Adrenal gland (tissue), 19 donors: ENCODE measurements at regions of chr2 and their contacts with region 1.

Region 1: GRCh38 chr2:222057347-222058073 is 241.3 kb downstream of the PAX3 start:
- DNase-seq: no peak
- H3K4me3 ChIP-seq: no peak overlapping the region
- H3K27ac ChIP-seq: no peak overlapping the region
- H3K4me1 ChIP-seq: no peaks in the 10 kb centered on the region
- H3K27me3 ChIP-seq: peaks cover 32% of the 10 kb centered on the region
- CTCF ChIP-seq: peak; percentile 16 to 68 (median 46)
- POLR2A ChIP-seq: no peak

Region 2: DNA sequence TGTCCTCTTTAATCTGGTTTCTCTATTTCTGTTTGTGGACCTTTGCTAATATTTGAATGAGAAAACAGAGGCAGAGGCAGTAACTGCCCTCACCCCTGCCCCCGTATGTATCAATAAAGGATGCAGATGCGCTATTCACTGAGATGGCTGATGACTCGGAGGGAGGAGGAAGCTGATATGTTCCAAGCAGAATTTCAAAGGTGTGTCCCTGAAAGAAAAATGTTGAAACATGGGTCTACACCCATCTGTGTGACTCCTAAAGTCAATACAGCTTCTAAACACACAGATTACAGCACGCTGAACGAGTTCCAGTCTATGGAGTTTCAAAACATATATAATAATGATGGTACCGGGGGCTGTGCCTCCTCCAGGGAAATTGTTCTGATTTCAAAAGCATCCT is 524.2 kb before region 1 on chr2:
- intact Hi-C with region 1: no loop called
- DNase-seq: no peak
- H3K4me3 ChIP-seq: no peak overlapping the region
- H3K27ac ChIP-seq: no peak overlapping the region
- H3K4me1 ChIP-seq: no peaks in the 10 kb centered on the region
- H3K27me3 ChIP-seq: no peaks in the 10 kb centered on the region
- CTCF ChIP-seq: no peak
- POLR2A ChIP-seq: no peak

Region 3: DNA sequence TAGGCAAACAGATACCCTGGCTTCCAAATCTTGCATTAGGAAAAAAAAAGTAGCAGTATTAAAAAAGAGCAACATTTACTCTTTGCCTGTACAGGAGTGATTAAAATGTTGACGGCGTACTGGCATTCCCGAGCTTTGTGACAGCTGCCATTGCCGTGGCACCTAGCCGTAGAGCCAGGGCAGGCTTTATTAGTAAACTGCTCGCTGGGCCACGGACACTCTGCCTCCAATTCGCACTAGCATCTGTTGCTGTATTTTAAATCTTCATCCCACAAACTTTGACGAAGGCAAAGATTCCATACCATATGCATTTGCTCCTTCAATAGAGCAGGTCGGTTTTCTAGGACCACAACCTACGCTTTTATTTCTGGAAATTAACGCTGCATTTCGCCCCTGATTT is 440.9 kb before region 1 on chr2:
- intact Hi-C with region 1: no loop called
- DNase-seq: no peak
- H3K4me3 ChIP-seq: no peak overlapping the region
- H3K27ac ChIP-seq: no peak overlapping the region
- H3K4me1 ChIP-seq: no peaks in the 10 kb centered on the region
- H3K27me3 ChIP-seq: no peaks in the 10 kb centered on the region
- CTCF ChIP-seq: no peak
- POLR2A ChIP-seq: no peak

Region 4: GRCh38 chr2:222613715-222614331 is 556.3 kb after region 1 on chr2:
- intact Hi-C with region 1: loop called in 1 of 2 experiments (anchors 10 kb)
- DNase-seq: peak in 2 of 7 donors; percentile 18
- H3K4me3 ChIP-seq: no peak overlapping the region
- H3K27ac ChIP-seq: no peak overlapping the region
- H3K4me1 ChIP-seq: no peaks in the 10 kb centered on the region
- H3K27me3 ChIP-seq: no peaks in the 10 kb centered on the region
- CTCF ChIP-seq: peak; percentile 64 to 79 (median 74)
- POLR2A ChIP-seq: no peak